ENCODE measurements at regions of chr1 and their contacts with region 1.

Region 1: DNA sequence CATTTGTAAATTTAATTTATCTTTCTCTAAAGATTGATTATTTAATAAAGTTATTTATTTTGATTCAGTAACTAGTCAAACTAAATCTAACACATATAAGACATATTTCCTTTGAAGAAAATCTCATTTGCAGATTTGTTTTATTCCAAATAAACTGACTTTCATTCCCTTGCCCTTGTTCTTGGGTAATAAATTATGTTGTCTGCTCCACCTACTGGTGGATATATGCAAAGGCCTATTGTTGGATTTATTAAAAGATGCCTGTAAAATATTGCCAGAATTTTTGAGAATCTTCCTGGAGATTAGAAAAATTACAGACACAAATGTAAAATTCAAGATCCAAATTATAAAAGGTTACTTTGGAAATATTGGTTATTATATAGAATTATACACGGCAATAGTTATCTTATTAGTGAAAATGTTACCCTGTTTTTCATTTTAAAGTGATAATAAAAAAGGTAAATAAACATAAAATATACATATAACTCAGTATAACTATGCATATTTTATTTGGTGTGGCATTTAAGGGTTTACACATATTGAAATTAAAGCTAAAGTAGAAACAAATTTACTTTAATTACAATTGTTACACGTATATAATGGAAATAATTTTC is 116.1 kb downstream of the SPATA17 start:
- DNase-seq: peak in 1 of 9 donors; percentile 4
- ATAC-seq: no peak
- H3K4me3 ChIP-seq: no peak overlapping the region
- H3K4me3 Mint-ChIP-seq: no peak overlapping the region
- H3K27ac ChIP-seq: no peak overlapping the region
- H3K27ac Mint-ChIP-seq: no peak overlapping the region
- H3K4me1 ChIP-seq: no peaks in the 10 kb centered on the region
- H3K4me1 Mint-ChIP-seq: no peaks in the 10 kb centered on the region
- H3K27me3 ChIP-seq: no peaks in the 10 kb centered on the region
- H3K27me3 Mint-ChIP-seq: no peaks in the 10 kb centered on the region

Region 2: GRCh38 chr1:217431393-217431792 is 315.9 kb before region 1 on chr1:
- CTCF ChIA-PET with region 1: no interaction called
- POLR2A ChIA-PET with region 1: no interaction called
- intact Hi-C with region 1: loop called in 1 of 2 experiments (anchors 5 kb)
- DNase-seq: no peak
- ATAC-seq: no peak
- H3K4me3 ChIP-seq: no peak overlapping the region
- H3K4me3 Mint-ChIP-seq: no peak overlapping the region
- H3K27ac ChIP-seq: no peak overlapping the region
- H3K27ac Mint-ChIP-seq: peak overlapping the region in 1 of 9 donors; percentile 4
- H3K4me1 ChIP-seq: no peaks in the 10 kb centered on the region
- H3K4me1 Mint-ChIP-seq: no peaks in the 10 kb centered on the region
- H3K27me3 ChIP-seq: no peaks in the 10 kb centered on the region
- H3K27me3 Mint-ChIP-seq: no peaks in the 10 kb centered on the region